Mammary epithelial cell (primary cell): ENCODE measurements at regions of chr16 and their contacts with region 1.

Region 1: GRCh38 chr16:57639172-57639887 is 10.9 kb downstream of the ADGRG1 start:
- DNase-seq: no peak
- H3K4me3 ChIP-seq: no peak overlapping the region
- H3K27ac ChIP-seq: no peak overlapping the region
- H3K4me1 ChIP-seq: peaks cover 67% of the 10 kb centered on the region
- H3K27me3 ChIP-seq: no peaks in the 10 kb centered on the region
- CTCF ChIP-seq: no peak

Region 2: DNA sequence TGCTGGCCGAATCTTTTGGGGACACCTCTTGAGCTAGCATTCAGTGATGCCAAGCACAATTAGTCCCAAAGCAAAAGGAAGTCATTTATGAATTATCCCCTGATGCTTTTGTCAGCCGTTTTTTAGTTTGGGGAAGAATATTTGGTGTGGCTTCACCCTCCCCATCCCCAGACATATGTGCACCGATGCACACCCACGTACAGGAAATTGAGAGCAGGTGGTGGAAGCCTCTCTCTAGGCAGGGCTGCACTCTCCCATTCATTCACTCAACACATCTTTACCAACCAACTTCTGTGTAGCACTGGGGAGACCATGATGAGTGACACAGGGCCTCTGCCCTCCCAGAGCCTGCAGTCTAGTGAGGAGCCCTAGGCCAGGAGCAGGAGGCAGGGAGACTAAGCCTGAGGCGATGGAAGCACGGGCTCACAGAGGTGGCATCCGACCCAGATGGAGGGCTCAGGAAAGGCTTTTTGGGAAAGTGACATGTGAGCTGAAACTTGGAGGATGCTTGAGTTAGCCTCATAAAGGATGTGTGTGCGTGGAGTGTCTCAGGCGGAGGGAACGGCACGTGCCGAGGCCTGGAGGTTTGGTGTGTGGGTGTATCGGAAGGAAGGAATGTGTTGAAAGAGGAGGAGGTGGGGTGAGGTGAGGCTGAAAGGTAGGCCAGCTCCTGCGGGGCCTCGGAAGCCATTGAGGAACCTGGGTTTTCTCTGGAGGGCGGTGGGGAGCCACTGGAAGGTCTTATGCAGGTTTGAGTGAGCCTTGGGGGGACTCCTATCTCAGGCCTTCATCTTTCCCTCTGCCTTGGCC is 497.3 kb before region 1 on chr16:
- CTCF ChIA-PET with region 1: no interaction called
- dilution Hi-C with region 1: no loop called
- in situ Hi-C with region 1: no loop called
- intact Hi-C with region 1: no loop called
- DNase-seq: no peak
- H3K4me3 ChIP-seq: no peak overlapping the region
- H3K27ac ChIP-seq: no peak overlapping the region
- H3K4me1 ChIP-seq: peaks cover 16% of the 10 kb centered on the region
- H3K27me3 ChIP-seq: no peaks in the 10 kb centered on the region
- CTCF ChIP-seq: no peak

Region 3: GRCh38 chr16:57416122-57416509 is 223.2 kb before region 1 on chr16:
- CTCF ChIA-PET with region 1: no interaction called
- dilution Hi-C with region 1: loop called (anchors 5 kb)
- in situ Hi-C with region 1: no loop called
- intact Hi-C with region 1: no loop called
- DNase-seq: no peak
- H3K4me3 ChIP-seq: no peak overlapping the region
- H3K27ac ChIP-seq: no peak overlapping the region
- H3K4me1 ChIP-seq: peaks cover 17% of the 10 kb centered on the region
- H3K27me3 ChIP-seq: no peaks in the 10 kb centered on the region
- CTCF ChIP-seq: no peak

Region 4: DNA sequence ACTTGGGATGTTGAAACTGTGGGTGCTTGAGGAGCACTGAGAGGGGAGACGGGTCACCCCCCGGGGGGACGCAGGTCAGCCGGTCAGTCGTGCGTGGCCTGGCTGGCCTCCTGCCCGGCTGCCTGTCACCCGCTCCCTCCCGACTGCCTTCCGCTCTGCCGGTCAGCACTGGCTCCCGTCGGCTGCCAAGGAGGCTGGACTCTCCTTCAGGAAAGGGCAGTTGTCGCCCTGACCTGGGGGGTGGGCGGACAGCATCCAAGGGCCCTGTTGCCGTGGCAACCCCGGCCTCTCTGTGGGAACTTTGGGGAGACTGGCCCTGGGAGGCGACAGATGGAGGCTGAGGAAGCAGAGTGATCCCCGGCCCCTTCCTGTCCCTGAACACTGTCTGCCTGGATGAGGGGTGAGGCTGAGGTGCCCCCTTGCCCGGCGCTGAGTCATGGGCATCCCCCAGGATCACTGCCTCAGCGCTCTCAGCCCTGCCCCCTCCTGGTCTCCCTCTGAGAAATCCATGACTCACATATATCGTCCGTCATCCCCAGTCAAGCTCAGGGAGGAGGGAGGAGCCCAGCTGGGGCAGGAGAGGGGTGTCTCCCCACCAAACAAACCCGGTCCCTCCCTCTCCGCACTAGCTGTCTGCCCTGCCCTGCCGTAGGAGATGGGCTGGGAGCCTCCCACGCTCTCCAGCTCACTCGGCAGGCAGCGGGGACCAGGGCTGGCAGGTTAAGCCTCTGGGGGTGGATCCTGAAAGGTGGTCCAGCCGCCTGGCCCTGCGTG is 11.1 kb before region 1 on chr16 and contains the start of gene ADGRG1:
- CTCF ChIA-PET with region 1: no interaction called
- dilution Hi-C with region 1: no loop called
- in situ Hi-C with region 1: no loop called
- intact Hi-C with region 1: loop called (anchors 2 kb)
- DNase-seq: peak; percentile 98
- H3K4me3 ChIP-seq: peak within 1 kb of the TSS; percentile 14 to 73 (median 31)
- H3K27ac ChIP-seq: peak within 1 kb of the TSS; percentile 79
- H3K4me1 ChIP-seq: peaks cover 93% of the 10 kb centered on the region
- H3K27me3 ChIP-seq: no peaks in the 10 kb centered on the region
- CTCF ChIP-seq: peak in 1 of 2 donors; percentile 26
- total RNA-seq, gene ADGRG1: 195 to 196 TPM

Region 5: DNA sequence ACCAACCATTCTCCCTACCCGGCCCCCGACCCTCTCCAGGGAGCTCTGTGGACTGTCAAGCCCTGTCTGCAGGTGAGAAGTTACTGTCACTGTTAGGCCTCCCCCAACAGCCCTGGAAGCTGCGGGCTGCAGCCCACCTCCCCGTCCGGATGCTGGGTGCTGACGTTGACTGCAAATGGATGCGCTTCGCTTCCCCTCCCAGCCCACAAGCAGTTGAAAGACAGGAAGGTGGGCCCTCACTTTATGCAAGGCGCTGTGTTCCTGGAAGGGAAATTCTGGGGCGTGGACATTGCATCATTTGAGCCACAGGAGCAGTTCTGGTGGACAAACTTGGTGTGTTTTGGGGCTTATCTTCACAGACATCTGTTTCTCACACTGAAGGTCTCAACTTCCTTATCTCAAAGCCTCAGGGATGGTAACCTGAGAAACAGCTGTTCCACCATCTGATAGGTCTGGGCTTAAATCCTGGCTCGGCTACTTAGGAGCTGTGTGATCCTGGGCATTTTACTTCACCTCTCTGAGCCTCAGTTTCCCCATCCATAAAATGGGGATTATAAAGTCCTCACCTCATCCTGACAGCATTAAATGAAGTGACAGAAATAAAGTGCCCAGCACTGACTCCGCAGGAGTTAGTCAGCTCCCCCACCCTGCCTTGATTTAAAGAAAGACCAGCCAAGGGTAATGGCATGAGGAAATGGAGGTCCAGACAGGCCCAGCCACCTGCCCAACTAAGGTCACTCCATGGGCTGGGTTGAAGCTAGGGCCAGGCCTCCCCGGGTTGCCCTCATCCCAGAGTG is 50.6 kb after region 1 on chr16:
- CTCF ChIA-PET with region 1: no interaction called
- dilution Hi-C with region 1: loop called (anchors 5 kb)
- in situ Hi-C with region 1: no loop called
- intact Hi-C with region 1: no loop called
- DNase-seq: no peak
- H3K4me3 ChIP-seq: no peak overlapping the region
- H3K27ac ChIP-seq: no peak overlapping the region
- H3K4me1 ChIP-seq: no peaks in the 10 kb centered on the region
- H3K27me3 ChIP-seq: no peaks in the 10 kb centered on the region
- CTCF ChIP-seq: no peak

Region 6: GRCh38 chr16:57834936-57835335 is 195.6 kb after region 1 on chr16:
- CTCF ChIA-PET with region 1: no interaction called
- dilution Hi-C with region 1: no loop called
- in situ Hi-C with region 1: no loop called
- intact Hi-C with region 1: no loop called
- DNase-seq: peak; percentile 84
- H3K4me3 ChIP-seq: peak overlapping the region; percentile 12 to 44 (median 25)
- H3K27ac ChIP-seq: peak overlapping the region; percentile 97
- H3K4me1 ChIP-seq: peaks cover 12% of the 10 kb centered on the region
- H3K27me3 ChIP-seq: no peaks in the 10 kb centered on the region
- CTCF ChIP-seq: no peak

Region 7: DNA sequence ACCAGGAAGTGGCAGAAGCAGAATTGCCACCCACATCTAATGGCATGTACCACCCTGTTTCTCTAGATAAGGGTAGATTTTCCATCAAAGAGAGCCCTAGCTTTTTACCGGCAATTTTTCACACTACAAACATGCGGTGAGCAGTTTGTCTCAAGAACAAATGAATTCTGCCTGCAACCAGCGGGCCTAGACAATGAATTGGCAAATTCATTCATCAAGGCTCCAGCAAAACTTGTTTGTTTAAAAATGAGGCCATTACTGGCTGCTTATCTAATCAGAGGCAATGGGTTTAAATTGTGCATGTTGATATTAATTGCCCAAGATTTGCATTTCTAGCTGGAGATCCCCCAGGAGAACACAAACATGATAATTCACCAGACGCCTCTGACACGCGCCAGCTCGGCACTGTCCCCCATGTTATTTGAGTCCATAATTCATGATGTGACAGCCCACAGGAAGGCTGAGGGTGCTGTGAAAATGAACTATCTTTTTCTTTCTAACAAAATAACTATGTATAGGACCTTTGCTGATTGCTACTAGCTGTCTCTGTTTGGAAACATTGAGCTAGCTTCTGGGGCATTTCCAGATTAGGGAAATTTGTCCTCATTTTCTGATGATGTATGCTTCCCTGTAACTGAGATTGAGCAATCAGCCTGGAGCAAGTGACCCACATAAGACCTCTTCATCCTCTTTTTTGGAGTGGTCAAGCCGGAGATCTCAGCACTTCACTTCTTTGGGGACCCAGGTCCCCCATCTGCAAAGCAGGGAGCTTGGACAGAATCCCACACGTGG is 250.8 kb after region 1 on chr16:
- CTCF ChIA-PET with region 1: interaction called, 38 read pairs
- dilution Hi-C with region 1: no loop called
- in situ Hi-C with region 1: no loop called
- intact Hi-C with region 1: no loop called
- DNase-seq: no peak
- H3K4me3 ChIP-seq: no peak overlapping the region
- H3K27ac ChIP-seq: no peak overlapping the region
- H3K4me1 ChIP-seq: peaks cover 18% of the 10 kb centered on the region
- H3K27me3 ChIP-seq: no peaks in the 10 kb centered on the region
- CTCF ChIP-seq: no peak